Right cardiac atrium (tissue), 5 donors: ENCODE measurements at regions of chr19 and their contacts with region 1.

Region 1: DNA sequence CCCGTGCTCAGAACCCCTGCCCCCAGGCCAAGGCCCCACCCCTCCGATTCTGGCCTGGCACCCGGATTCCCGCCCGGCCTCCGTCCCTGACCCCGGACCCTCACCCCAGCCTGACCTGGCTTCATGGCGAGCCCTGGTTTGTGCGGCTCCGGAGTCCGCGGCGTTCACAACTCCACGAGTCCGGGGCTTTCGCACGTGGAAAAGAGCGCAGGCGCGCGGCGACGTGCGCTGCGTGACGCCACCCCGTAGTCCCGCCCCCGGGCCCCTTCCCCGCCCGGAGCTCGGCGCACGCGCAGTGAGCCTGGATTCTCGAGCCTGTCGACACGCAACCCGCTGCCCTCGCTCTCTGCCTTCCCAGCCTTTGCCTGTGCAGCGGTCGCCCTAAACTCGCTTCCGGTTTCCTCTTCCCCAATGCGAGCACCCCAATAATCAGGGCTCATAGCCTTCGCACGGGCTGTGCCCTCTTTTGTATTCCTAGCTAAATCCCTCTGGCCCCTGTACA is at the start of gene FBL:
- DNase-seq: peak; percentile 97 to 99 (median 99)
- ATAC-seq: peak; percentile 97
- H3K4me3 ChIP-seq: peak within 1 kb of the TSS; percentile 94
- H3K27ac ChIP-seq: peak within 1 kb of the TSS; percentile 73
- H3K4me1 ChIP-seq: peaks cover 7% of the 10 kb centered on the region
- H3K27me3 ChIP-seq: no peaks in the 10 kb centered on the region
- total RNA-seq, gene FBL: 68.6 to 83.7 (median 80.9) TPM

Region 2: DNA sequence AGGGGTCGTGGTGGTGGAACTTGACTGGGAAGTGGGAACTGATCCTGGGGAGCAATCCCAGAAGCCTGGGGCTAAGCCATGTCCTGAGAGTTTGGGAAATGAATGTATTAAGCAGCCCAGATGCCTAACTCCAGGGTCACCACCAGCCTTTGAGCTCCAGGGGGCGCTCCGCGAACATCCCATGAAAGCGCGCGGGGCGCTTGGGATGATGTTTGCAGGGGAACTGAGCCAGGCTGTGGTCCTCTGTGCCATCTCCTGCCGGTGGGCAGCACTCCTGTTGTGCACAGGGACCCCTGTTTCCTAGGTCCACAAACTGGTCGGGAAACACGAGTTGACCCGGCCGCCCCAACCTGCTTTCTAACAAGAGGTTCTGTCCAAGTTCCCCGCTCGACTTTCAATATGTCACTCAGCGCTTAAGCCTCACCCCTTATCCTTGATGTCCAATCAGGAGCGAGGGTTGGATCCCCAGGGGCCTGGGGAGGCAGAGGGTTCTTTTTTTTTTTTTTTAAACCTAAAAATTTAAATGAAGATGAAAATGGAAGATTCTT is 53.2 kb before region 1 on chr19:
- intact Hi-C with region 1: loop called in 3 of 4 experiments (anchors 2 to 5 kb)
- DNase-seq: peak; percentile 76 to 90 (median 87)
- ATAC-seq: peak; percentile 96 to 99
- H3K4me3 ChIP-seq: peak overlapping the region; percentile 40
- H3K27ac ChIP-seq: no peak overlapping the region
- H3K4me1 ChIP-seq: no peaks in the 10 kb centered on the region
- H3K27me3 ChIP-seq: no peaks in the 10 kb centered on the region

Region 3: GRCh38 chr19:39970675-39971379 is 124.6 kb after region 1 on chr19 and contains the start of gene PSMC4:
- intact Hi-C with region 1: loop called in 1 of 4 experiments (anchors 10 kb)
- DNase-seq: peak; percentile 98 to 99 (median 99)
- ATAC-seq: peak; percentile 100
- H3K4me3 ChIP-seq: peak within 1 kb of the TSS; percentile 92
- H3K27ac ChIP-seq: peak within 1 kb of the TSS; percentile 79
- H3K4me1 ChIP-seq: peaks cover 4% of the 10 kb centered on the region
- H3K27me3 ChIP-seq: no peaks in the 10 kb centered on the region
- total RNA-seq, gene PSMC4: 66.7 to 82.3 (median 70.6) TPM